ENCODE measurements at regions of chr12 and their contacts with region 1.

Region 1: DNA sequence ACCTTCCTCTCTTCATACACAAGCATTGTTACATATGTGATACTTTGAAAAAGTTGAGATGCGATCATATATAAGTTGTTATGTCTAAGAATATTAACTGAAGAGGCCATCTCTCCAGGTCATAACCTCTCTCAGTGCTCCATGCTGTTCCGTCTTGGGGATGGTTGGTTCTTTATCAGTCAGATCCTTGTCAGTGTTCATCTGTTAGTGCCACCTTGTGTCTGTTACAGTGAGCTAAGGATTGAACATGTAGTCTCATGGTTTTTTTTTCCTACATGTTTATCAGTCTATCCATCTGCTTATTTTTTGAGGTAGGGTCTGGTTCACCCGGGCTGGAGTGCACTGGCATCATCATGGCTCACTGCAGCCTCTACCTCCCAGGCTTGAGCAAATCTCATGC is 30.5 kb downstream of the EP400 start:
- DNase-seq: no peak
- H3K4me3 ChIP-seq: no peak overlapping the region
- H3K27ac ChIP-seq: no peak overlapping the region
- H3K27me3 ChIP-seq: no peaks in the 10 kb centered on the region
- CTCF ChIP-seq: no peak

Region 2: GRCh38 chr12:131882779-131883520 is 97.3 kb before region 1 on chr12:
- in situ Hi-C with region 1: loop called (anchors 10 kb)
- DNase-seq: no peak
- H3K4me3 ChIP-seq: no peak overlapping the region
- H3K27ac ChIP-seq: no peak overlapping the region
- H3K27me3 ChIP-seq: no peaks in the 10 kb centered on the region
- CTCF ChIP-seq: no peak

Measured in brain microvascular endothelial cell (primary cell).